ENCODE measurements at regions of chr21 and their contacts with region 1.

Region 1: GRCh38 chr21:44949779-44950198 is 10.0 kb downstream of the SLX9 start:
- DNase-seq: peak; percentile 72 to 98 (median 86)
- ATAC-seq: peak; percentile 86 to 96 (median 91)
- H3K4me3 ChIP-seq: no peak overlapping the region
- H3K27ac ChIP-seq: no peak overlapping the region
- H3K4me1 ChIP-seq: no peaks in the 10 kb centered on the region
- H3K27me3 ChIP-seq: no peaks in the 10 kb centered on the region
- CTCF ChIP-seq: peak; percentile 84 to 94 (median 90)

Region 2: GRCh38 chr21:45129189-45129923 is 179.6 kb after region 1 on chr21:
- intact Hi-C with region 1: loop called (anchors 5 to 10 kb)
- DNase-seq: no peak
- ATAC-seq: peak in 3 of 4 donors; percentile 8 to 13 (median 12)
- H3K4me3 ChIP-seq: no peak overlapping the region
- H3K27ac ChIP-seq: peak overlapping the region in 2 of 4 donors; percentile 17 to 19
- H3K4me1 ChIP-seq: no peaks in the 10 kb centered on the region
- H3K27me3 ChIP-seq: no peaks in the 10 kb centered on the region
- CTCF ChIP-seq: no peak